GM10248 (cell line): ENCODE measurements at regions of chr5 and their contacts with region 1.

Region 1: DNA sequence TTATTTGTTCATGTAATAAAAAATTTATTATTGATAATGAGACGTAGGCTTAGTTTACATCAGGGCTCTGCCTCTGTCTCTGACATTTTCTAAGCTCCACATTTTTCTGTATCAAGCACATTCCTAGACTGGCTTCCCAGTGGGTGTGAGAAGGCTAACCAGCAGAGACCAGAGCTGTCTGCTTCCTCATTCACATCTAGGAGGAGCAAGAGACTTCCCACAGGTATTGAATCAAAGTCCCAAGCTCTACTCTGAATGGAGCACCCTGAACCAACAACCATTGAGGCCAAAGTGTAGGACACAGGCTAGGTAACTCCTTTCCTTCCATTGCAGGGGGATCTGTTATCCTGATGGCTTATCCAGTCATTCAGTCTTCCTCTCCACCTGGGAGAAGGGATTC is 72.4 kb downstream of the PARP8 start:
- DNase-seq: no peak
- CTCF ChIP-seq: no peak

Region 2: GRCh38 chr5:50727149-50727496 is 11.7 kb before region 1 on chr5:
- CTCF ChIA-PET with region 1: interaction called, 14 read pairs
- POLR2A ChIA-PET with region 1: no interaction called
- DNase-seq: no peak
- CTCF ChIP-seq: no peak